Endothelial cell of umbilical vein (primary cell): ENCODE measurements at regions of chr14 and their contacts with region 1.

Region 1: DNA sequence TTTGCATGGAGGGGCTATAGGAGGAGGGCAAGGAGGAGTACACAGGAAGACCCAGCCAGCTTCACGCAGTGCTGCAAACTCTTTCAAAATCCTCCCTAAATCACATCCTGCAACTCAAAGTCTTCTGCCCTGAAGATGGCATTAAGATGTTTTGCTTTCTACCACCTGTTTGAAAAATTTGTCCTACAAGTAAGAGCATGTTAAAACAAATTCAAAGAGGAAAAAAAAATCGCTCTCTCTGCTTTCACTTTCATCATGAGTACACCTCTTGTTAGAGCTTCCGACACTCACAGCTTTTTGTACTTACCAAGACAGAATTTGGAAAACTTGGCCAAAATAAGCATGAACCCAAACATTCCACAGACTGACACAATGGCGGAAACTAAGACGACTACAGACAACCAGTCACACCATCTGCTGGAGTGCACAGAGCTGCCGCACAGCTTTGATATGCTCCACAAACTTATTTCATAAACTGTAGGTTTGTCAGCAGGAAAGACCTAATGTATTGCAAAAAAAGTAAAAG is 21.3 kb downstream of the GCH1 start:
- DNase-seq: no peak
- H3K4me3 ChIP-seq: peak overlapping the region; percentile 22 to 85 (median 27)
- H3K27ac ChIP-seq: peak overlapping the region; percentile 49
- H3K4me1 ChIP-seq: peaks cover 23% of the 10 kb centered on the region
- H3K27me3 ChIP-seq: no peaks in the 10 kb centered on the region
- CTCF ChIP-seq: no peak
- POLR2A ChIP-seq: no peak

Region 2: DNA sequence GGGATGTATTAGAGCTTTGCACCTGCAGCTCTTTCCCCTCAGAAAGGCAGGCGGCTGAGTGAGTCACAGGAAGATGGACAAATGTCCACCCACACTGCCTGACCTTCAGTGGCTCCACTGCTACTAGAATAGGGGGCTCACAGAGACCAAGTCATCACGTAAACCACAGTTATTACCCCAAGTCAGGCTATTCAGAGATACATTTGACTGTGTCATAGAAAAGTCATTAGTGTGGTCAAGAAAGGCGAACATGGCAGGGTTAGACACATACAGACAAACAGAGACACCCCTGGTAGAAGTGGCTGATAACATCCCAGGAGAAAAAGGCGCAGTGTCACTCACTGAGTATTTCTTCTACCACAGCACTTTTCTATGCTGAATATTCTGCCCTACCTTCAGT is 14.7 kb before region 1 on chr14:
- CTCF ChIA-PET with region 1: interaction called, 25 read pairs
- POLR2A ChIA-PET with region 1: no interaction called
- dilution Hi-C with region 1: no loop called
- intact Hi-C with region 1: no loop called
- DNase-seq: peak; percentile 33
- H3K4me3 ChIP-seq: no peak overlapping the region
- H3K27ac ChIP-seq: no peak overlapping the region
- H3K4me1 ChIP-seq: peaks cover 13% of the 10 kb centered on the region
- H3K27me3 ChIP-seq: no peaks in the 10 kb centered on the region
- CTCF ChIP-seq: no peak
- POLR2A ChIP-seq: no peak

Region 3: GRCh38 chr14:54893151-54893760 is 12.0 kb after region 1 on chr14:
- CTCF ChIA-PET with region 1: interaction called, 14 read pairs
- POLR2A ChIA-PET with region 1: no interaction called
- dilution Hi-C with region 1: no loop called
- intact Hi-C with region 1: no loop called
- DNase-seq: peak; percentile 77
- H3K4me3 ChIP-seq: no peak overlapping the region
- H3K27ac ChIP-seq: no peak overlapping the region
- H3K4me1 ChIP-seq: peaks cover 6% of the 10 kb centered on the region
- H3K27me3 ChIP-seq: no peaks in the 10 kb centered on the region
- CTCF ChIP-seq: peak; percentile 58 to 61
- POLR2A ChIP-seq: no peak

Region 4: GRCh38 chr14:54902521-54903420 is 21.5 kb after region 1 on chr14 and contains the start of gene GCH1:
- CTCF ChIA-PET with region 1: interaction called, 7 read pairs
- POLR2A ChIA-PET with region 1: no interaction called
- dilution Hi-C with region 1: no loop called
- intact Hi-C with region 1: loop called (anchors 2 kb)
- DNase-seq: peak; percentile 70
- H3K4me3 ChIP-seq: peak within 1 kb of the TSS; percentile 71 to 97 (median 86)
- H3K27ac ChIP-seq: peak within 1 kb of the TSS; percentile 16
- H3K4me1 ChIP-seq: peaks cover 5% of the 10 kb centered on the region
- H3K27me3 ChIP-seq: no peaks in the 10 kb centered on the region
- CTCF ChIP-seq: peak; percentile 35 to 54
- POLR2A ChIP-seq: peak; percentile 46
- total RNA-seq, gene GCH1: 4.6 and 5.0 TPM in 2 replicates